A673 (cell line): ENCODE measurements at regions of chr16 and their contacts with region 1.

Region 1: GRCh38 chr16:24525970-24526559 is 13.3 kb upstream of the RBBP6 start:
- DNase-seq: no peak
- H3K4me3 ChIP-seq: no peak overlapping the region
- H3K27ac ChIP-seq: no peak overlapping the region
- H3K4me1 ChIP-seq: no peaks in the 10 kb centered on the region
- H3K27me3 ChIP-seq: no peaks in the 10 kb centered on the region
- CTCF ChIP-seq: no peak

Region 2: GRCh38 chr16:24539291-24539849 is 13.3 kb after region 1 on chr16 and contains the start of gene RBBP6:
- CTCF ChIA-PET with region 1: no interaction called
- POLR2A ChIA-PET with region 1: interaction called, 25 read pairs
- intact Hi-C with region 1: no loop called
- DNase-seq: peak; percentile 97
- H3K4me3 ChIP-seq: peak within 1 kb of the TSS; percentile 94
- H3K27ac ChIP-seq: peak within 1 kb of the TSS; percentile 100
- H3K4me1 ChIP-seq: peaks cover 22% of the 10 kb centered on the region
- H3K27me3 ChIP-seq: no peaks in the 10 kb centered on the region
- CTCF ChIP-seq: peak; percentile 24; the same call in 1 of the 2 replicates
- total RNA-seq, gene RBBP6: 72.2 and 78.9 TPM in 2 replicates